ENCODE measurements at regions of chr6 and their contacts with region 1.

Region 1: DNA sequence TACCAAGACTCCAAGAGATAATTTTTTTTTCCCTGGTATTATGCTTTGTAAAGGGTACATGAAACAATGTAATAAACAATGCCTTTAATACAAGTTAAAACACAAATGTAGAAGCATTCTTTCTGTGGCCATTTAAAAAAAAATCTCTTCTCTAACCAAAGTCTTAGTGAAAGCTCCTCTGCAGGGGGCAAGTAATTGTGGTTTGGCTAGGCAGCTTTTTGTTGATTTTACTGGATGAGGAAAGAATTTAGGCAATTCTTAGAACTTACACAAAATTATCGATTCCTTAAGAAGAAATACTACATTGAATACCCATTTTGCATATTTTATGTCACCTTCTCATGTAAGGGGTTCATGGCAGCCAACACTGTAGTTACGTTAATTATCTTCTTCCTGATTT is 12.4 kb downstream of the TFB1M start:
- DNase-seq: no peak
- H3K4me3 ChIP-seq: no peak overlapping the region
- H3K27ac ChIP-seq: no peak overlapping the region
- H3K4me1 ChIP-seq: peaks cover 0 to 5% (median 0%) of the 10 kb centered on the region in 4 experiments; a peak in 1 of 7 replicates
- H3K27me3 ChIP-seq: no peaks in the 10 kb centered on the region
- CTCF ChIP-seq: no peak
- EP300 ChIP-seq: no peak
- POLR2A ChIP-seq: no peak
- RAD21 ChIP-seq: no peak

Region 2: DNA sequence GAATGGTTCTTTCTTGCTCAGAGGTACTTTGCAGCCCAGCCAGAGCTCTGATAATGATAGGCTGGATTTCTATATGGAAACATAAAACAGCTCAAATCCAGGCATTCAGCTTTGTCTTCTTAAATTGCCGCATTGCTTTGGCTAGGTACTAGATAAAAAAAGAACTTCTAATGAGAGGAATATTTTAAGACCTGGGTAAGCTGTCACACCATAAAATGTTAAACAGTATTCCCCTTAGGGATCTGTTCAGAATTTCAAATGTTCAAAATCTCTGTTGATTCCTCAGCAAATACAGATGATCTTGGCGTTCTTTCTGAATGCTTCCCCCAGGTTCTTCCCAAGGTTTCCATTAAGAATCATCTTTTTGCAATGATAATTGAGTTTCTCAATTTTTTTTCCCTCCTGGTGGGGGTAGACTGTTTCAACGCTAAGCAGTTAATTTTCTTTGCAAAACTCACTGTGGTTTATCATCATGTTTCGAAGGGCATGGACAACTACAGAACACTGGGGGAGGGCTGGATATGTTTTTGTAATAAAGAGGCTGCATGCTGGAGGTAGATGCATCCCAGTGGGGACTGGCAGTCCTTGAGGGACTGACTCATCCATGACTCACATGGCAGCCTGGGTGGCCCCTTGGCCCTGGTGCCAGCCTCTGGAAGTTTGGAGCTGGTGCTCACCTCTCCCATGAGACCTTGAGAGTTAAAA is 275.7 kb before region 1 on chr6:
- CTCF ChIA-PET with region 1: no interaction called
- POLR2A ChIA-PET with region 1: no interaction called
- DNase-seq: peak in 1 of 2 experiments; percentile 15
- H3K4me3 ChIP-seq: no peak overlapping the region
- H3K27ac ChIP-seq: no peak overlapping the region
- H3K4me1 ChIP-seq: peaks cover 0 to 3% (median under 1%) of the 10 kb centered on the region in 4 experiments; a peak in 2 of 7 replicates
- H3K27me3 ChIP-seq: no peaks in the 10 kb centered on the region
- CTCF ChIP-seq: no peak
- EP300 ChIP-seq: no peak
- POLR2A ChIP-seq: no peak
- RAD21 ChIP-seq: no peak

Region 3: GRCh38 chr6:155287762-155288161 is 14.1 kb before region 1 on chr6:
- CTCF ChIA-PET with region 1: interaction called, 18 read pairs
- POLR2A ChIA-PET with region 1: interaction called, 4 read pairs
- DNase-seq: no peak
- H3K4me3 ChIP-seq: no peak overlapping the region
- H3K27ac ChIP-seq: no peak overlapping the region
- H3K4me1 ChIP-seq: no peaks in the 10 kb centered on the region; a peak in 1 of 7 replicates
- H3K27me3 ChIP-seq: no peaks in the 10 kb centered on the region
- CTCF ChIP-seq: no peak
- EP300 ChIP-seq: no peak
- POLR2A ChIP-seq: no peak
- RAD21 ChIP-seq: 0 out of 4 replicates have a peak, but pooled peaks of 1 of the 2 experiments have one; percentile 19

Region 4: DNA sequence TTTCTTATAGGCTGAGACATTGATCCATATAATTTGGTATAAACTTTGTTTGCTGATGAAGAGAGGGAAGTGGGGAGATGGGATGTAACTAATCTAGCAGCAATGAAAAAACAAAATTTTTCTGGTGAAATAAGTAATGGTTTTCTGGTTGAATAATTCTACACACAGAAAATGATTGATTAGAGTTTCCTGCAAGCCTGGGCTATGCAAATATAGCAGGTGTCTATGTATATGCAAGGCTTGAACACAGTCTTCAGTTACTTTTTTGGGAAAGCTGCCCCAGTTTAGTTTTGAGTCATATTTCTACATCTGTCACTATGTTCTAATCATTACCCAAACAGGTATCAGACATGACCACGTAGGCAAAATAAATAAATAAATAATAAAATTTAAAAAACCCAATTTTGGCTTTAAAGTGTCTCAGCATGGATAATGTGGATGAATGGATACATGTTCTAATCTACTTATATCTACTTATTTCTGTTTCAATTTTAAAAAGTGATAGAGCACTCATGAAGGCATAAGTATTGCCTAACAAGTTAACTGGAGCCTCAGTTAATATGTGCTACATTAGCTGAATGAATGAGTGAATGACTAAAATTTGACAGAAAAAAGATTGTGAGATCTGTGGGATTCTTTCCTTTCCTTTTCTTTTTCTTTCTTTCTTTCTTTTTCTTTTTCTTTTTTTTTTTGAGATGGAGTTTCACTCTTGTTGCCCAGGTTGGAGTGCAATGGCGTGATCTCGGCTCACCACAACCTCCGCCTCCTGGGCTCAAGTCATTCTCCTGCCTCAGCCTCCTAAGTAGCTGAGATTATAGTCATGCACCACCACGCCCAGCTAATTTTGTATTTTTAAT is 49.6 kb after region 1 on chr6:
- CTCF ChIA-PET with region 1: no interaction called
- POLR2A ChIA-PET with region 1: no interaction called
- DNase-seq: no peak
- H3K4me3 ChIP-seq: no peak overlapping the region
- H3K27ac ChIP-seq: no peak overlapping the region
- H3K4me1 ChIP-seq: no peaks in the 10 kb centered on the region
- H3K27me3 ChIP-seq: no peaks in the 10 kb centered on the region
- CTCF ChIP-seq: no peak
- EP300 ChIP-seq: no peak
- POLR2A ChIP-seq: no peak
- RAD21 ChIP-seq: no peak

Region 5: GRCh38 chr6:155946860-155947259 is 645.0 kb after region 1 on chr6:
- CTCF ChIA-PET with region 1: no interaction called
- POLR2A ChIA-PET with region 1: no interaction called
- DNase-seq: no peak
- H3K4me3 ChIP-seq: no peak overlapping the region
- H3K27ac ChIP-seq: no peak overlapping the region
- H3K4me1 ChIP-seq: peaks cover 0 to 5% (median 0%) of the 10 kb centered on the region in 4 experiments; a peak in 1 of 7 replicates
- H3K27me3 ChIP-seq: no peaks in the 10 kb centered on the region
- CTCF ChIP-seq: no peak
- EP300 ChIP-seq: no peak
- POLR2A ChIP-seq: no peak
- RAD21 ChIP-seq: no peak